ENCODE measurements at regions of chr11 and their contacts with region 1.

Region 1: GRCh38 chr11:86456052-86456939 is 81.6 kb downstream of the CCDC81 start:
- DNase-seq: peak; percentile 85

Region 2: DNA sequence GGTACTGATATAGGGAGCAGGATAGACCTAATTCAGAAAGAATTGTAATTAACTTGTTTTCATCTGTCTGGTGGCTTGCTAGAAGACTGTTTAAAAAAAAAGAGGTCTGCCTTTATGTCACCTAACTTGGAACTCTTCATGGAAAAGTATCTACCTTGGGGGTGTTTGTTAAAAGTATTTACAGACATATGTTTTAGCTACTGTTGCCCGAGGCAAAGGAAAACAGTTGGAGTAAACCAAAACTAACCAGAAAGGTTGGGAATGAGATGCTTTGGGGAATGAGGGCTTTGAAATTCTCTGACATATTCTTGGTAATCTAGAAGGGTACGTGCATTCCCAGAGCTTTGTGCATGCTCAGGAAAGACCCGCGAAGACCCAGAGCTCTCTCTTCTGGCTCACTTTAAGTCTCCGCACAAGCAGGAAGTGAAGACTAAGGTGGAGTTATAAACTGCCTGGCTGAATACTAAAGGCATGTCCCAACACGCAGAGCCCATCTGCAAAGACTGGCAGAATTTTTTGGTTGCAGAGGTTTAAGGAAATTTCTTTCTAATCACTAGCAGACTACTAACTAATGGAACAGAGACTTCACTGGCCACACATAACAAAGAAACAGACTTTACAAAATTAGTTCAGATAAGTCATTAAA is 121.1 kb before region 1 on chr11:
- intact Hi-C with region 1: no loop called
- DNase-seq: no peak

Region 3: DNA sequence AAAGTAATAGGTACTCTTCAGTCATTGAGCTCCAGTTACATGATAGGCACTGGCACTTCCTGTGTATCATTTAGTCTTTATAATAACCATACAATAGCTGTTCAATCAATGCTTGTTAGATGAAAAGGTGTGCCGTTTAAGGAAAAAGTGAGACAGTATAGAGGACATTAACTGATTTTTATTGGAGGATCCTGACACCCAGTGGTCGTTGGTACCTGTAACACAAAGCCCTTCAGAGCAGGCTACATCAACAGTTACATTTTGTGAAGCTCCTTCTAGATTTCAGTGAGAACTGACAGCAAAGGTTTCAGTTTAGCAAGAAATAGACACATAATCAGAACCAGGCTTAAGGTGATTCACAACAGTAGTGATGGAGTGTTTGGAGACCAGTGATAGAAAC is 37.4 kb before region 1 on chr11:
- intact Hi-C with region 1: no loop called
- DNase-seq: no peak

Region 4: GRCh38 chr11:86483940-86484794 is 27.9 kb after region 1 on chr11:
- intact Hi-C with region 1: no loop called
- DNase-seq: no peak

Region 5: GRCh38 chr11:86571273-86571948 is 115.1 kb after region 1 on chr11:
- intact Hi-C with region 1: no loop called
- DNase-seq: no peak

Region 6: DNA sequence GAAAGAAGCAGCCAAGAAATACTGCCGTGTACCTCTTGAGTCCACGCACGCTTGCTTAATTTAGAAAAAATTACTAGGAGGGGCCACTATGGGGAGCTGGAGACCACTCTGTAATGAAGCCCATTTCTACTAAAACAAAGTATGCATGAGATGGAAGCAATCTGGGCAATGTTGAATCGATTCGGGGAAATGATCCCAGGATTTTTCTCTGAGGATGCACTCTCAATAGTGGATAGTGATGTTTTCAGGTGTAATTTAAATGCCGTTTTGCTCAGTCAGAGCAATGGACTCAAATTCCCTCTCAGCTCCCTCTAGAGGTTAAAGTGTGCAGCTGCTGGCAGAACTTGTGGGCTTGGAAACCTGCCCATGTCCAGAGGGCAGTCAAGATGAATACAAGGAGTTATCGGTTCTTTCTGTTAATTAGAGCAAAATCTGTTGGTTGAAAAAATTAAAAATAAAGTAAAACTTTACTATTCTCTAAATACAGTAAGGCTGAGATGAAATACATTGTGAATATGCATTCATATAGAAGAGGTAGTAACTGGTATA is 152.0 kb after region 1 on chr11:
- intact Hi-C with region 1: loop called (anchors 2 kb)
- DNase-seq: no peak

Region 7: DNA sequence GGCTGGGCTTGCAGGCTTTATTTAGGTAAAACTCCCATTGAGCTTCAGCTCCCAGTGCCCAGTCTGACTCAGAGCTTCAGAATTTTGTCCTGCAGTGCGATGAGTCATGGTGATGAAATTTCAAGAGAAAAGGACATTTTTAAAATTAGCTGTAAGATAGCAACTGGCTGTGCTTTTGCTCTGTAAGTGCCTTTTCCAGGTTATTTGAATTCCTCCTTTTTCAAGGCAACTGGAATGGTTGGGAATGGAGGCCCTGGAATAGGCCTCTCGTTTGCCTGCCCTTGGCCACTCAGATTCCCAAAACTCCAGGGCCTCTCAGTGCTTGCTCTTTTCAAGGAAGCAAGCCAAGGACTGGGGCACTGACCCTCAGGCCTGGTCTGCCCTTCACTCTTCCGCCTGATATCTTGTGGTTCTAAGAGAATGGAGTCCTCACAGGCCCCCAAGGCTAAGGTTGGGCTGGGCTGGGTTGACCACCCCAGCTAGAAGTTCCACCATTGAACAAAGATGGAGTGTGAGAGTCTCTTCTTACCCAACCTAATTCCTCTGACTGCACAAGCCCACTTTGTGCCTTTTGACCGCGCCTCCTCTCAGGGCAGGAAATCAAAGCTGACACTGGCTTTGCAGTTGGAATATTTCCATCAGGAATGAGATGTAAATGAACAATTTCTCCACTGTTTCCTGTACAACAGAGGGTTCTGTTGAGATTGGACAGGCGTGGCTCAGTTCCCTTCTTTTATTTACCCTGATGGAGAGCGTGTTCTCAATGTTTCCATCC is 284.6 kb after region 1 on chr11:
- intact Hi-C with region 1: loop called (anchors 5 kb)
- DNase-seq: no peak

Region 8: DNA sequence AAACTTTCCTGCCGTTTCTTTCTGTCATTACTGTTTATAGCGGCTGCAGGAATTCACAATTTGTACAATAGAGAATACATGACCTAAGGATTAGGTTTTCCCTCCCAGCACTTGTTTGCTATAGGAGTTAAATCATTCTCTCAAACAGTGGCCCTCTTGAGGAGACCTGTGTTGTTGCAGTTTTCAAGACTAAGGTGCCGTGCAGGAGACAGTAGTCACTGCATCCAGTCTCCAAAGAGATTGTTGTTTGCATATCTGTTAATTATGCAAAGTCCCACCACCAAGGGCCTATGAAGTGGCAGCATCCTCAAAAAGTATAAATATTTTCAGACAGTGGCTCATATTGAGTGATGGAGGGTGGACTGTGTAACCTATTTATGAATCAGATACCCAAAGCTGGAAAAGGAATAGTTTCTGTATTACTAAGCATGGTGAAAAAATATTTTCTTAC is 346.3 kb after region 1 on chr11:
- intact Hi-C with region 1: loop called (anchors 5 kb)
- DNase-seq: no peak

Region 9: GRCh38 chr11:86818466-86819192 is 362.3 kb after region 1 on chr11:
- intact Hi-C with region 1: loop called (anchors 1 kb)
- DNase-seq: no peak

Region 10: DNA sequence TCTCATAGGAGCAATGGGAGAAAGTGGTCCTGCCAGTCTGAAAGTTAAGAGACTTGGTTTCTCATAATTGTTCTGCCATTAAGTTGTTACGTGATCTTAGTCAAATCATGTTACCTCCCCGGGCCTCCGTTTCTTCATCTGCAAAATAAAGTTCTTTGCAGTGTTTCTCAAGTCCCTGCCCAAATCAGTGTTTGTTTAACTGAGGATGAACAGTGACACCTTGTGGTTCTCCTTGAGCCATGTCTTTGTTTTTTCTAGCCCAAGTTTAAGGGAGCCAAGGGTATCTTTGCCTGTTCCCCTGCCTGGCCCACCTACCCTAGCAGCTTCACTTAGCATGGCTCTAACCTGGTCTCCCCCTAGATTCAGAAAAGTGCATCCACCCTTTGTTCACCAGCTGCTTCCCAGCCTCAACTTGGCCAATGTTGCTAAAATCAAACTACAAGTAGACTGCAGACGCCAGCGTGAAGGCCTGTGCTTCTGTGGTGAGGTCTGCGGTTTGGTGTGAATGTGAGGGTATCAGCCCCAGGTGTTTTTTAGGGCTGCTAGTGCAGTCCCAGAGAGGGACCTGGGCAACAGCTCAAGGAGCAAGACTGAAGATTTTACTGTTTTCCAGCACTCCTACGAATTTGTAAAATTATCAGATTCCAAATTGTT is 463.4 kb after region 1 on chr11:
- intact Hi-C with region 1: loop called (anchors 1 kb)
- DNase-seq: no peak